ENCODE measurements at regions of chr16 and their contacts with region 1.

Region 1: DNA sequence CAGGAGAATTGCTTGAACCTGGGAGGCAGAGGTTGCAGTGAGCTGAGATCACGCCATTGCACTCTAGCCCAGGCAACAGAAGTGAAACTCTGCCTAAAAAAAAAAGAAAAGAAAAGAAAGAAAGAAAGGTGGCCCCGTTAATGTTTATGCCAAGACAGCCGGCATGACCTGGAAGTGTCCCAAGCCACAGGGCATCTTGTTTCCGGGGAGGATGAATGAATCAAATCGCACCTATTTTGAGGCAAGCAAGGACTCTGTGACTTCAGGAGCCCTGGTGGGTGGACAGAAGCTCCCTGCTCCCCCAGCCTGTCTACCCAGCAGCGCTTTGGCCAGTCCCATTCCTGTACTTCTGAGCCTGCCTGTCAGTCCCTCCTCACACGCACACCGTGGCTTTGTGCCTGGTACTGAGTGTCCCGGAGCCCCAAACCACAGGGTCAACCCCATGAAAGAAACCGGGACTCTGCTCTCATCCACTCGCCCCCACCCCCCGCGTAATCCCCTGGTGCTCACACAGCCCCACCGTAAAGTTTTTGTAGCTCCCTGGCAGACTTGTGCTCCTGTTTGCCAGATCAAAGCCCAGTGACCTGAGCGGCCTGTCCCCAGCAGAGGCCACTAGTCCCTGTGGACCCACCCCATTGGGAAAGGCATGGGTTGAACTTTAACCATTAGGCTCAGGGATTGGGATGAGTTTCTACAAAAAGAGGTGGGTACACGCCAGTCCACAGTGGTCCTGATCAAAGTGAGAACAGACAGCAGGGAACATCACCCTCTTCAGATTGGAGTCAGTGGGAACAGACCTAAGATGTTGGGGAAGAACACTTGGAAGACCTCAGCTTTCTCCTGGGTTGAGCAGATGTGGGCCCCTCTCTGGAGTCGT is 19.3 kb downstream of the CD2BP2 start:
- DNase-seq: peak; percentile 63
- H3K4me3 Mint-ChIP-seq: peak overlapping the region; percentile 78
- H3K27ac Mint-ChIP-seq: peak overlapping the region; percentile 59
- H3K4me1 Mint-ChIP-seq: peaks cover 26% of the 10 kb centered on the region
- H3K27me3 Mint-ChIP-seq: no peaks in the 10 kb centered on the region

Region 2: GRCh38 chr16:29805378-29806098 is 530.3 kb before region 1 on chr16:
- CTCF ChIA-PET with region 1: no interaction called
- intact Hi-C with region 1: no loop called
- DNase-seq: peak; percentile 99
- H3K4me3 Mint-ChIP-seq: peak overlapping the region; percentile 98
- H3K27ac Mint-ChIP-seq: peak overlapping the region; percentile 100
- H3K4me1 Mint-ChIP-seq: peaks cover 37% of the 10 kb centered on the region
- H3K27me3 Mint-ChIP-seq: no peaks in the 10 kb centered on the region

Region 3: DNA sequence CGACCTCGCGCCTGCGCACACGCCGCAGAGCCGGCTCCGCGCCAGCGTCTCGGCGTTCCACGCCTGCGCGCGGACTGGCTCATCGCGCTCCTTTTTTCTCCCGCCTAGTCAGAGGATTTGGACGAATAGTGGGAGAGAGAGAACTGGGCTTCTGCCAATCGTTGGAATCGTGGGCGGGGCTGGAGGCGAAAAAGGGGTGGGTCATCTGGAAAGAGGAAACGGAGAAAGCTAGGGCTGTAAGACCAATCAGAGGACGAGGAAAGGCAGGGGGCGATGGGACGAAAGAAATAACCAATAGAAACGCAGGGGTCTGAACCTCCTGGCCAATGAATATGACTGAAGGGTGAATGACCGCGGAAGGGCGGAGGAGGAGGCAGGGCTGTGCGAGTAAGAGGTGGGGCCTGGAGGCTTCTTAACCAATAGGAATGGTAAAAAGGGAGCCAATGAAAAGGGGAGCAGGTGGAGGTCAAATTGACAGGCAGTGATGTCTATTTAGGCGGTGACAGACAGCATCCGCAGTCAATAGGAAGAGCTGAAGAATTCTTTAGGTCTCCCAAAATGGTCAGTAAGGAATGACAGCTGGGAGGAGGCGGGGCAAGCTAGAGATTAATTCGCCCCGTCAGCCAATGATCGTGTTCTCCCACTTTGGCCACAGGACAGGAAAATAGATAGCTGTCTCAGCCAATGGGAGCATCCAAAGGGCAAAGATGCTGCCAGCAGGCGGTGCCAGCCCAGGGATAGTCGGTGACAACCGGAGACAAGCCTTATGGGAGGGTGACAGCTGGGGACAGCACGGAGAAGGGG is 34.8 kb after region 1 on chr16 and contains the start of gene TBC1D10B:
- CTCF ChIA-PET with region 1: no interaction called
- intact Hi-C with region 1: loop called (anchors 1 kb)
- DNase-seq: peak; percentile 100
- H3K4me3 Mint-ChIP-seq: peak within 1 kb of the TSS; percentile 94
- H3K27ac Mint-ChIP-seq: peak within 1 kb of the TSS; percentile 98
- H3K4me1 Mint-ChIP-seq: peaks cover 40% of the 10 kb centered on the region
- H3K27me3 Mint-ChIP-seq: no peaks in the 10 kb centered on the region
- total RNA-seq, gene TBC1D10B: 36.6 to 38.4 TPM

Region 4: DNA sequence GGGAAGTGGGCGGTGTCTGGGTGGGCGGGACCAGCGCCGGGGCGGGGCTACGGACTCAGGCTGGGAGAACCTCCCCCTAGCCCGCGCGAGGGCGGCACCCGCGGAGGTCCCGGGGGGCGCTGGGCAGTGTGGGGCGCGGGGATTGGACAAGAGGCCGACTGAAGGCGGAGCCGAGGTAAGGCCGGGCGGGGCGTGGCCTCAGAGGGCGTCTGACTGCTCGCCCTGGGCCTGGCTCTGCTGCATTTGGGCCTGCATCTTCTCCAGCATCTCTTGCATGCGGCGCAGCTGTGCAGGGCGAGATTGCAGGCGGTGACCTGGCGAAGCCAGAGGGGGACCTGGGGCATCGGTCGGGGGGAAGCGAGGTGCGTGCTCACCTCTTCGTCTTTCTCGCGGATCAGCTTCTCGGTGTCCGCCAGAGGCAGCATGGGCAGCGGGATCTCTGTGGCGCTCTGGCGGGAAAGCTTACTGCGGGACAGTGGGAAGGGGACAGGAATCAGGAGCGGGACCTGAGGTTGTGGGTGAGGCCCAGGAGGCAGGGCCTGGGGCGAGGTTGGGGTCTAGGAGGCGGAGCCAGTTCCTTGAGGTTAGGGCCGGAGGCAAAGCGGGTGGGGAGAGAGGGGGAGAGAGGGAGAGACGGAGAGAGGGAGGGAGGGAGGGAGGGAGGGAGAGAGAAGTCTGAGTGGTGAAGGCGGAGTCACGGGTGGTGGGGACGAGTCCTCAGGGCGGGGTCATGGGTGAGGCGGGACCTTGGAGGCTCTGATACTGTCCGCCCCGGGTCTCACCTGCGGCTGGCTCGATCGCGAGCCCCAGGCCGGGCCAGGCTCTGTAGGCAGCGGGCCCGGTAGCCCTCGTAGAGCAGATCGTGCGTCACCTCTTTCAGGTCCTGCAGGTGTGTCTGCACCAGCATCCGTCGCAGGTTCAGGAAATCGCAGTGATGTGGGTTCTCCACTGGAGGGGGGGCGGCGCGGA is 42.7 kb after region 1 on chr16:
- CTCF ChIA-PET with region 1: no interaction called
- intact Hi-C with region 1: loop called (anchors 2 kb)
- DNase-seq: peak; percentile 100
- H3K4me3 Mint-ChIP-seq: peak overlapping the region; percentile 99
- H3K27ac Mint-ChIP-seq: peak overlapping the region; percentile 99
- H3K4me1 Mint-ChIP-seq: peaks cover 43% of the 10 kb centered on the region
- H3K27me3 Mint-ChIP-seq: no peaks in the 10 kb centered on the region

Region 5: GRCh38 chr16:30394592-30395154 is 58.8 kb after region 1 on chr16:
- CTCF ChIA-PET with region 1: no interaction called
- intact Hi-C with region 1: no loop called
- DNase-seq: no peak
- H3K4me3 Mint-ChIP-seq: peak overlapping the region; percentile 94
- H3K27ac Mint-ChIP-seq: no peak overlapping the region
- H3K4me1 Mint-ChIP-seq: peaks cover 30% of the 10 kb centered on the region
- H3K27me3 Mint-ChIP-seq: no peaks in the 10 kb centered on the region